Right ventricle myocardium inferior (tissue), 1 donor: ENCODE measurements at regions of chr1 and their contacts with region 1.

Region 1: GRCh38 chr1:219566951-219567947 is 45.7 kb downstream of the ZC3H11B start:
- DNase-seq: no peak
- ATAC-seq: peak; percentile 59

Region 2: DNA sequence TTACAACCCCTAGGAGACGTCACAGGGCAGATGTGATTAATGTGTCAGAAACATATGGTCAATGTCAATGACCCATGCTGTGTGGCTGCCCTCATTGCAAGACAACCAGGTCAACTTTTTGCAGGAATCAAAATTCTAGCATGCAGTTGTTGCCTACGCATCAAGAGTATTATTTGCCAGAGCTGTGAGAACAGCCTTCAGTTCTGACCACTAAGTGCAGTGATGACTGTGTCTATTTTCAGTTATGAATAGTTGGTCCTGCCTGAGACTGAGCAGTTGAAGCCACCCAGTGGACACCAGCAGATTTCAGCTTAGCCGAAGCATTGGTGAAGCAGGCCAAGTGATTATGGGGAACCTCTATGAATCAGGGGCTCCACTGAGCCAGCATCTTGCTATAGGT is 346.3 kb before region 1 on chr1:
- intact Hi-C with region 1: loop called (anchors 10 kb)
- DNase-seq: no peak
- ATAC-seq: peak; percentile 65